ENCODE measurements at regions of chr14 and their contacts with region 1.

Region 1: DNA sequence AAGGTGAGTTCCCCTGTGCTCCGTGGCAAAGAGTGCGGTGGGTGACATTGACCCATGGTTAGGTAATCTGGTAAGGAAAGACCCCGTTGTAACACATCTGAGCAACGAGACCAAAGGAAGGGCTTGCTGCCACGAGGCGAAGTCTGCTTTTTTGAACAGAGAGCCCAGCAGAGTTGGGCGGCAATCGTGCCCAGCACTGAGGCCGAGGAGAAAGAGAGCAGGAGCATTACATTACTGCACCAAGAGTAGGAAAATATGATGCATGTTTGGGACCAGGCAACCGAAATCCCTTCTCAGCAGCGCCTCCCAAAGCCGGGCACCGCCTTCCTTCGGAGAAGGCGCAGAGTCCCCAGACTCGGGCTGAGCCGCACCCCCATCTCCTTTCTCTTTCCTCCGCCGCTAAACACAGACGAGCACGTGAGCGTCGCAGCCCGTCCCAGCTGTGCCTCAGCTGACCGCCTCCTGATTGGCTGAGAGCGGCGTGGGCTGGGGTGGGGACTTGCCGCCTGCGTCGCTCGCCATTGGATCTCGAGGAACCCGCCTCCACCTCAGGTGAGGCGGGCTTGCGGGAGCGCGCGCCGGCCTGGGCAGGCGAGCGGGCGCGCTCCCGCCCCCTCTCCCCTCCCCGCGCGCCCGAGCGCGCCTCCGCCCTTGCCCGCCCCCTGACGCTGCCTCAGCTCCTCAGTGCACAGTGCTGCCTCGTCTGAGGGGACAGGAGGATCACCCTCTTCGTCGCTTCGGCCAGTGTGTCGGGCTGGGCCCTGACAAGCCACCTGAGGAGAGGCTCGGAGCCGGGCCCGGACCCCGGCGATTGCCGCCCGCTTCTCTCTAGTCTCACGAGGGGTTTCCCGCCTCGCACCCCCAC is at the start of gene HIF1A:
- DNase-seq: peak; percentile 98
- H3K4me3 ChIP-seq: peak within 1 kb of the TSS; percentile 72 to 94 (median 90)
- H3K27ac ChIP-seq: peak within 1 kb of the TSS; percentile 89 to 99 (median 92)
- H3K4me1 ChIP-seq: peaks cover 0 to 40% (median 28%) of the 10 kb centered on the region in 4 donors
- H3K27me3 ChIP-seq: no peaks in the 10 kb centered on the region
- CTCF ChIP-seq: no peak
- EP300 ChIP-seq: peak in 1 of 4 donors; percentile 63
- POLR2A ChIP-seq: peak; percentile 78 to 86
- total RNA-seq, gene HIF1A: 49.7 to 84.0 (median 67.0) TPM

Region 2: GRCh38 chr14:61420326-61420725 is 274.7 kb before region 1 on chr14:
- intact Hi-C with region 1: no loop called
- DNase-seq: no peak
- H3K4me3 ChIP-seq: no peak overlapping the region
- H3K27ac ChIP-seq: no peak overlapping the region
- H3K4me1 ChIP-seq: no peaks in the 10 kb centered on the region
- H3K27me3 ChIP-seq: no peaks in the 10 kb centered on the region
- CTCF ChIP-seq: no peak
- EP300 ChIP-seq: no peak
- POLR2A ChIP-seq: no peak

Region 3: GRCh38 chr14:61475316-61475715 is 219.7 kb before region 1 on chr14:
- intact Hi-C with region 1: loop called (anchors 10 kb)
- DNase-seq: no peak
- H3K4me3 ChIP-seq: no peak overlapping the region
- H3K27ac ChIP-seq: peak overlapping the region in 2 of 4 donors; percentile 73 to 76
- H3K4me1 ChIP-seq: peaks cover 0 to 33% (median 30%) of the 10 kb centered on the region in 4 donors
- H3K27me3 ChIP-seq: no peaks in the 10 kb centered on the region
- CTCF ChIP-seq: peak in 3 of 4 experiments; percentile 57 to 66 (median 65)
- EP300 ChIP-seq: no peak
- POLR2A ChIP-seq: no peak

Region 4: GRCh38 chr14:61585598-61586543 is 109.2 kb before region 1 on chr14:
- intact Hi-C with region 1: loop called (anchors 5 kb)
- DNase-seq: peak; percentile 85
- H3K4me3 ChIP-seq: no peak overlapping the region
- H3K27ac ChIP-seq: peak overlapping the region; percentile 45 to 80 (median 68)
- H3K4me1 ChIP-seq: peaks cover 0 to 26% (median 21%) of the 10 kb centered on the region in 4 donors
- H3K27me3 ChIP-seq: no peaks in the 10 kb centered on the region
- CTCF ChIP-seq: no peak
- EP300 ChIP-seq: peak in 2 of 4 donors; percentile 54 to 59
- POLR2A ChIP-seq: no peak

Region 5: DNA sequence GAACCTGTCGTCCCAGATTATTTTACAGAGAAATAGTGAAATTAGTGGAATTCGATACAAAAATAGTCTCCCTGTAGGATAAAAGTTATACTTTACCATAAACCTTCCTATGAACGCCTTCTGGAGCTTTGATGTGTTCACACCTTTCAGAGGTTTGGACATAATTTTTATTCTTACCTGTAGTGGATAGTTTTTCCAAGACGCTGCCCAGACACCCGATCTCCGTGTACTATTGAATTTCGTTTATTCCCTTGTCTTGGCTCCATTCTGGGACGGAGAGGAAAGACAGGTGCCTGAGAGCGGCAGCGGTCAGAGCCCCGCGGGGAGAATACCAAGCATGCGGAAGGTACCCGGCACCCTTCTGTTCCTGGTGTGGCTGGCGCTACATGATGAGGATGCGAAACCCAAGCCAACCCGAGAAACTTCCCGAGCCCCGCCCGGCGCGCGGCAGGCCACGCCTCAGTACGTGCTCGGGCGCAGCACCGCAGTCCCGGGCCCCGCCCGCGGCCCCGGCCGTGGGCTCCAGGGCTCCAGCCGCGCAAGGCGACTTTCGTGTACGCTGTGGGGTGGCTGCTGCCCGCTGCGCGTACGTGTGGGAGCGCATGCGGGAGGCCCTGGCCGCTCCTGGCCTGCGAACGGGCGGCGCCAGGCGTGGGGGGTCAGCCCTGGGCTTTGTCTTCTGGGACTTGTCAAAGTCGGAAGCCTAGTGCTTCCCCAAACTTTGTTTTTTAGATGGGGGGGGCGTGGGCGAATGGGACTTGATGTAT is 55.8 kb after region 1 on chr14:
- intact Hi-C with region 1: loop called (anchors 2 kb)
- DNase-seq: peak; percentile 92
- H3K4me3 ChIP-seq: peak overlapping the region; percentile 42 to 64 (median 62)
- H3K27ac ChIP-seq: peak overlapping the region; percentile 84 to 93 (median 89)
- H3K4me1 ChIP-seq: peaks cover 0 to 22% (median 8%) of the 10 kb centered on the region in 4 donors
- H3K27me3 ChIP-seq: no peaks in the 10 kb centered on the region
- CTCF ChIP-seq: no peak
- EP300 ChIP-seq: no peak
- POLR2A ChIP-seq: peak; percentile 16 to 39

Region 6: GRCh38 chr14:61761959-61762786 is 67.1 kb after region 1 on chr14 and contains the start of gene SNAPC1:
- intact Hi-C with region 1: loop called (anchors 2 kb)
- DNase-seq: peak; percentile 98
- H3K4me3 ChIP-seq: peak within 1 kb of the TSS; percentile 63 to 82 (median 76)
- H3K27ac ChIP-seq: peak within 1 kb of the TSS; percentile 84 to 91 (median 89)
- H3K4me1 ChIP-seq: peaks cover 0 to 40% (median 21%) of the 10 kb centered on the region in 4 donors
- H3K27me3 ChIP-seq: no peaks in the 10 kb centered on the region
- CTCF ChIP-seq: no peak
- EP300 ChIP-seq: peak in 1 of 4 donors; percentile 89
- POLR2A ChIP-seq: peak; percentile 74 to 80
- total RNA-seq, gene SNAPC1: 4.1 to 7.8 (median 7.0) TPM

Region 7: GRCh38 chr14:61837336-61838229 is 142.5 kb after region 1 on chr14:
- intact Hi-C with region 1: no loop called
- DNase-seq: peak; percentile 86
- H3K4me3 ChIP-seq: no peak overlapping the region
- H3K27ac ChIP-seq: no peak overlapping the region
- H3K4me1 ChIP-seq: no peaks in the 10 kb centered on the region
- H3K27me3 ChIP-seq: no peaks in the 10 kb centered on the region
- CTCF ChIP-seq: peak; percentile 72 to 92 (median 84)
- EP300 ChIP-seq: no peak
- POLR2A ChIP-seq: no peak